HepG2 (cell line): ENCODE measurements at regions of chr12 and their contacts with region 1.

Region 1: DNA sequence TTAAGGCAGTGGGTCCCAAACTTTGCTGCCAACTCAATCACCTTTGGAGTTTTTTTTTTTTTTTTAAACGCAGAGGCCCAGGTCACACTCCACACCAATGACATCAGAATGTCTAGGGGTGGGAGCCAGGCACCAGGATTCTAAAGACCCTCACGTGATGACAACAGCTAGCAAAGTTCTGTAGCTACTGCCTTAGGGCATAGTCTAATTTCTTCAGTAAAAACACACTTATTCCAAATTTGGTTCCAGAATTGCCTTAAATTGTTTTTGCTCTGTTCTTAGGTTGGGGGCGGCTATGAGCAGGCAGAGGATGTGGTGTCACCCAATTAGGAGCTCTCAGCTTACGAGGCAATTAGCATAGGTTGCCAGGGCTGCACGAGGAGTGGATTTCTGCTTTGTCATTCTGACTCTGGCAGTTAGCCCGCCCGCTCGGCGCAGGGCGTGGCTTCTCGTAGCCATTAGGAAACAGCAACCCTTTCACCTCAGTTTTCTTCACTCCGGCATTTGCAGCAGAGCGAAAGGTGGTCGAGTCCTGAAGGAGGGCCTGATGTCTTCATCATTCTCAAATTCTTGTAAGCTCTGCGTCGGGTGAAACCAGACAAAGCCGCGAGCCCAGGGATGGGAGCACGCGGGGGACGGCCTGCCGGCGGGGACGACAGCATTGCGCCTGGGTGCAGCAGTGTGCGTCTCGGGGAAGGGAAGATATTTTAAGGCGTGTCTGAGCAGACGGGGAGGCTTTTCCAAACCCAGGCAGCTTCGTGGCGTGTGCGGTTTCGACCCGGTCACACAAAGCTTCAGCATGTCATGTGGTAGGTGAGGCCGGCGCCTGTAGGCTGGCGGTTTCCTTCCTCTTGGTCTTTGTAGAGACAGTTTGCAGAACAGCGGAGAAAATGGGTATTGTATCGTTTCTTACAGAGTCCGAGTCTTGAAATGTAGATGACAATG is 16.7 kb upstream of the EID3 start:
- DNase-seq: peak; percentile 95
- ATAC-seq: peak; percentile 90
- H3K4me3 ChIP-seq: peak overlapping the region; percentile 85 to 91 (median 91)
- H3K27ac ChIP-seq: peak overlapping the region; percentile 98
- H3K4me1 ChIP-seq: peaks cover 24% of the 10 kb centered on the region
- H3K27me3 ChIP-seq: no peaks in the 10 kb centered on the region; a peak in 1 of 5 replicates
- CTCF ChIP-seq: peak; percentile 7; the same call in 1 of the 2 replicates
- EP300 ChIP-seq: peak; percentile 25 to 68; a peak in 3 of 4 replicates
- POLR2A ChIP-seq: peak; percentile 89 to 98
- RAD21 ChIP-seq: no peak

Region 2: DNA sequence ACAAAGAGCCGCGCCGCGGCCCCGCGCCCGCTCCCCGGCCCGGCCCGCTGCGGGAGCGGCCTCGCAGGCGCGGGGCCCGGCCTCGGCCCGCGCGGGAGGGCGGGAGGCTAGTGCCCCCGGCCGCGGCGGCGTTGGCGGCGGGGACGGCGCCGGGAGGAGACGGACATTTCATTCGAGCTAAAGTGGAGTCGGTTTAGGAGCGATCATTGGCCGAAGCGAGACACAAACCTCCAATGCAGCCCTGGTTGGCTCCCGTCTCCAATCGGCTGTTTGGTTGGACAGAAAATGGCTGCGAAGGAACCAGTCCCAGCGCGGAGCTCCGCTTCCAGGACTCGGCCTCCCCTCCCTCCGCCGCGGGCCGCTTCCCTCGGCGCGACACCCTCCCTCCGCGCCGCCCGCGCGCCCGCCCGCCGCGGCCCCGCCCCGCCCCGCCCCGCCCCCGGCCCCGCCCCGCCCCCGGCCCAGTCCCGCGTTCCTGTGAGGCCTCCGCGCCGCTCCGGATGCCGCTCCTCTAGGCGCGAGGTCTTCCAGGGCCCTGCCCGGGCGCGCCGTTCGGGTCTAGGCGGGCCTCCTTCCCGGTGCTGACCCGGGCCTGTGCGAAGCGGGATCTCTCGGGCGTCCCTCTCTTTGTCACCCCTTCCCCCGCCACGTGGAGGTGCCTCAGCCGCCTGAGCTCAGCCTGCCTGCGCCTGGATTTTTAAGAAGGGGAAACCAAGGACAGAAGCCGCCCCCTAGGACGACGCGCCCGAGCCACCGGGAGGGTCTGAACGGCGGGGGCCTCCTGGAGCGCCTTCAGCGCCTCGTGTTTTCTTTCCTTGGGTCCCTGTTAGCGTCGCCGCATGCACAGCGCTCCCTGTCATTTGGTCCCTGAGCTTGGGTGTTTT is 148.7 kb before region 1 on chr12 and contains the start of gene NFYB:
- CTCF ChIA-PET with region 1: no interaction called
- POLR2A ChIA-PET with region 1: interaction called, 13 read pairs
- in situ Hi-C with region 1: no loop called
- intact Hi-C with region 1: loop called (anchors 5 kb)
- DNase-seq: peak; percentile 95
- ATAC-seq: peak; percentile 97
- H3K4me3 ChIP-seq: peak within 1 kb of the TSS; percentile 65 to 95 (median 84)
- H3K27ac ChIP-seq: peak within 1 kb of the TSS; percentile 92
- H3K4me1 ChIP-seq: peaks cover 41% of the 10 kb centered on the region
- H3K27me3 ChIP-seq: peaks cover 0 to 4% of the 10 kb centered on the region in 2 experiments; a peak in 2 of 5 replicates
- CTCF ChIP-seq: no peak
- EP300 ChIP-seq: peak in 1 of 2 experiments; percentile 99; a peak in 2 of 4 replicates
- POLR2A ChIP-seq: peak; percentile 64 to 87
- RAD21 ChIP-seq: no peak
- total RNA-seq, gene NFYB: 36.6 and 48.7 TPM in 2 replicates

Region 3: DNA sequence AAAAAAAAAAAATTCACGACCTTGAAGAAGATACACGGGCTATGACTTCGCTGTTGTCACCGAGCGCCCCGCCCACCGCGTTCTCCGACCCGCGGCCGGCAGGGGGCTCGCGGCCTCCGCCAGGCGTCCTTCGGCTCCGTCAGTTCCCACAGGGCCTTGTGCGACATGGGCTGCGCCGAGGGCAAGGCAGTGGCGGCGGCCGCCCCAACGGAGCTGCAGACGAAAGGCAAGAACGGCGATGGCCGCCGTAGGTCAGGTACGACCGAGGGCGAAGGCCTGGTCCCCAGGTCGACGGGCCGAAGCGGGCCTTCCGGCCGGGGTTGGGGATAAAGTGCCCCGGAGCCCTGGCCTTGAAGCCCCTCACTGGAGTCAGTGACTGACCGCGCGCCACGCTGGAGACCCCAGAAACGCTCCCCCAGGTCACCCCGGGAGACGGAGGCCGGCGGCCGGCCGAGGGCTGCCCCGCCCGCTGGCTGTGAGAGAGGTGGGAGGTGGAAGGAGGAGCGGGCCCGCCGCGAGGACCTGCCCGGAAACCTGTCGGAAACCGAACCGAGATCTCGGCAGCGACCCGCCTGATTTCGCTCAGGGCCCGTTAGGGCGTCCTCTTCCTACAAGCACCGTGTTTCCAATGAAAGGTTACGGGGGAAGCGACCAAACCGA is 71.0 kb before region 1 on chr12 and contains the start of gene TXNRD1:
- CTCF ChIA-PET with region 1: no interaction called
- POLR2A ChIA-PET with region 1: interaction called, 6 read pairs
- in situ Hi-C with region 1: loop called (anchors 10 kb)
- intact Hi-C with region 1: loop called (anchors 5 kb)
- DNase-seq: peak; percentile 30
- ATAC-seq: peak; percentile 92
- H3K4me3 ChIP-seq: peak within 1 kb of the TSS in 1 of 3 experiments; percentile 50; a peak in 1 of 6 replicates
- H3K27ac ChIP-seq: no peak within 1 kb of the TSS
- H3K4me1 ChIP-seq: peaks cover 19% of the 10 kb centered on the region
- H3K27me3 ChIP-seq: no peaks in the 10 kb centered on the region
- CTCF ChIP-seq: peak; percentile 83
- EP300 ChIP-seq: no peak
- POLR2A ChIP-seq: no peak
- RAD21 ChIP-seq: peak; percentile 76
- total RNA-seq, gene TXNRD1: 190 and 310 TPM in 2 replicates

Region 4: GRCh38 chr12:104276273-104277131 is 10.3 kb before region 1 on chr12:
- CTCF ChIA-PET with region 1: no interaction called
- POLR2A ChIA-PET with region 1: interaction called, 18 read pairs
- in situ Hi-C with region 1: no loop called
- intact Hi-C with region 1: no loop called
- DNase-seq: no peak
- ATAC-seq: peak; percentile 74
- H3K4me3 ChIP-seq: peak overlapping the region; percentile 33 to 65 (median 62)
- H3K27ac ChIP-seq: no peak overlapping the region
- H3K4me1 ChIP-seq: peaks cover 28% of the 10 kb centered on the region
- H3K27me3 ChIP-seq: no peaks in the 10 kb centered on the region
- CTCF ChIP-seq: no peak
- EP300 ChIP-seq: no peak
- POLR2A ChIP-seq: no peak
- RAD21 ChIP-seq: no peak

Region 5: GRCh38 chr12:104334581-104334980 is 47.8 kb after region 1 on chr12:
- CTCF ChIA-PET with region 1: no interaction called
- POLR2A ChIA-PET with region 1: no interaction called
- in situ Hi-C with region 1: no loop called
- intact Hi-C with region 1: no loop called
- DNase-seq: no peak
- ATAC-seq: peak; percentile 15; the same call in 1 of the 3 replicates
- H3K4me3 ChIP-seq: no peak overlapping the region
- H3K27ac ChIP-seq: no peak overlapping the region
- H3K4me1 ChIP-seq: no peaks in the 10 kb centered on the region
- H3K27me3 ChIP-seq: no peaks in the 10 kb centered on the region
- CTCF ChIP-seq: no peak
- EP300 ChIP-seq: no peak
- POLR2A ChIP-seq: no peak
- RAD21 ChIP-seq: no peak

Region 6: DNA sequence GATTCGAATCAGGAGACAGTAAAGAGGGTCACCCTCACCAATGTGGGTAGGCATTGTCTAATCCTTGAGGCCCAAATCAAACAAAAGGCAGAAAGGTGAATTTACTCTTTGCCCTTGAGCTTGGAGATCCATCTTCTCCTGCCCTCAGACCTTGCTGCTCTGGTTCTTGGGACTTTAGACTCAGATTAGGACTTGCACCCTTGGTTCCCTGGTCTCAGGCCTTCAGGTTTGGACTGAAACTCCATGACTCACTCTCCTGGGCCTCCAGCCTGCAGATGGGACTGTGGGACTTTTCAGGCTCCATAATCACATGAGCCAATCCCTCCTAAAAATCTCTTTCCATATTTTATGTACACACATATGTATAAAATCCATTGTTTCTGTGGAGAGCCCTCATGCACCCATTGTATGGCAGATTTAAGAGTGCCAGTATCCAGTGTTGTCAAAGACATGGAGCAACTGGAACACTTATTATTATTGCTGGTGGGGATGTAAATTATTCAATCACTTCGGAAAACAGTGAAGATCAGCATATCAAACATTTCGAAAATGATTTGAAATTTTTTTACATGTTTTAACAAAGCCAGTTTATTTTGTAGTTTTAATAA is 65.4 kb after region 1 on chr12:
- CTCF ChIA-PET with region 1: no interaction called
- POLR2A ChIA-PET with region 1: no interaction called
- in situ Hi-C with region 1: no loop called
- intact Hi-C with region 1: no loop called
- DNase-seq: no peak
- ATAC-seq: no peak
- H3K4me3 ChIP-seq: no peak overlapping the region
- H3K27ac ChIP-seq: no peak overlapping the region
- H3K4me1 ChIP-seq: peaks cover 6% of the 10 kb centered on the region; the same call in 1 of the 2 replicates
- H3K27me3 ChIP-seq: no peaks in the 10 kb centered on the region
- CTCF ChIP-seq: no peak
- EP300 ChIP-seq: no peak
- POLR2A ChIP-seq: no peak
- RAD21 ChIP-seq: no peak